Activated CD4-positive, alpha-beta T cell treated with anti-CD3 and anti-CD28 coated beads, Interleukin-2, amount 10 ng/mL, durations not matched to agents 24 days and 14 days (primary cell): ENCODE measurements at regions of chr3 and their contacts with region 1.

Region 1: DNA sequence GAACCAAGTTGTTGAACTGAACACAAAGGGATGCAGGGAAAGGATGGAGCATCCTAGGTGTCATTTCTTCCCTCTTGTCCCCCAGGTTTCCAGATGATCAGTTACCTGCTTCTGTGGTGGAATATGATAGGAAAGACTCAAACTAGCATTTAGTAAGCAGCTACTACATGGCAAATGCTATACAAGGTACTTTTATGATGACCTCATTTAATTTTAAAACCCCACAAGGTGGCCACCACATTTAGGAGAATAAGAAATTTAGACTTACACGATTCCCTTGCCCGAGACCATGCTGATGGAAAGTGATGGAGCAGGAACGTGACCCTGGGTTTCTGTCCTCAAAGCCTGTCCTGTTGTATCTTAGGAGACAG is 40.9 kb downstream of the CCR4 start:
- DNase-seq: no peak
- H3K4me3 Mint-ChIP-seq: peak overlapping the region; percentile 58
- H3K27ac Mint-ChIP-seq: peak overlapping the region; percentile 96
- H3K4me1 Mint-ChIP-seq: peaks cover 52% of the 10 kb centered on the region
- H3K27me3 Mint-ChIP-seq: no peaks in the 10 kb centered on the region

Region 2: GRCh38 chr3:32960404-32961170 is 31.7 kb before region 1 on chr3:
- intact Hi-C with region 1: loop called (anchors 1 kb)
- DNase-seq: no peak
- H3K4me3 Mint-ChIP-seq: peak overlapping the region; percentile 68
- H3K27ac Mint-ChIP-seq: peak overlapping the region; percentile 96
- H3K4me1 Mint-ChIP-seq: peaks cover 46% of the 10 kb centered on the region
- H3K27me3 Mint-ChIP-seq: no peaks in the 10 kb centered on the region

Region 3: GRCh38 chr3:33006081-33006480 is 13.8 kb after region 1 on chr3:
- intact Hi-C with region 1: loop called (anchors 1 kb)
- DNase-seq: no peak
- H3K4me3 Mint-ChIP-seq: no peak overlapping the region
- H3K27ac Mint-ChIP-seq: peak overlapping the region; percentile 48
- H3K4me1 Mint-ChIP-seq: peaks cover 40% of the 10 kb centered on the region
- H3K27me3 Mint-ChIP-seq: no peaks in the 10 kb centered on the region

Region 4: GRCh38 chr3:33030802-33031201 is 38.5 kb after region 1 on chr3:
- intact Hi-C with region 1: loop called (anchors 2 kb)
- DNase-seq: peak; percentile 82
- H3K4me3 Mint-ChIP-seq: no peak overlapping the region
- H3K27ac Mint-ChIP-seq: peak overlapping the region; percentile 45
- H3K4me1 Mint-ChIP-seq: peaks cover 25% of the 10 kb centered on the region
- H3K27me3 Mint-ChIP-seq: no peaks in the 10 kb centered on the region